ENCODE measurements at regions of chr17 and their contacts with region 1.

Region 1: DNA sequence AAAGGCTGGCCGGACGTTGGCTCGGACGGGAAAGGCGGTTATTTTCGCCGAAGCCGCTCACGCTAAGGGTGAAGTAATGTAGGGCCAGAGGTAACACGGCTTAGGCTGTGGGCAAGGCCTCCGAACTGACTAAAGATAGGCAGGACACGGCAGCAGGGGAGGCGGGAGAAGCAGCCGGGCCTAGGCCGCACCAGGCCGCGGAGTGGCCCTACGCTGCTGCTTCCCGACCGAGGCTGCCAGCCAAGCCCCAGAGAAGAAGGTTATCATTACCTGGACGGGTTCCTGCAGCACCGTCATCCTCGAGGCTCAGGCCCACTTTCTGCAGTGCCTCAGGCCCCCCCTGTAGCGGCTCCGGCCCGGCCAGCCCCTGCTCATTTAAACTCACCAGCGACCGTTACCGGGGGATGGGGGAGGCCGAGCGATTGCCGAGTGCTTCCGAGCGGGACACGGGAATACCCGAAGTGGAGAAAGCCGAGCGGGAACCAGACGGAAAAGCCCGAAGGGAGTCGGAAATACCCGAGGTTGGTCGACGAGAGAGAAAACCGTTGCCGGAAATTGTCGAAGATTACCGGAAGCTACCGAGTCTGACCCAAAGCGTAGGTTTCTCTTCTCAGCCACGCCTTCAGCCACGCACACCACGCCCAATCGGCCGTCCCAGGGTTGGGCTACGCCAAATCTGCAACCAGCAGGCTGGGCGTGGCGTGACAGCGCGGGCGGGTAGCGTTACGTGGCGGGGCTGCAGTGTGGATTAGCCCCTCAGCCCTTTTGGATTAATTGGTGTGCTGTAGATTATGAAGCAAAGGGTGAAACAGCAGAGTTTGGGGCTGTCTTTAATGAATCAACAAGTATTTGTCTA is at the start of gene CDC27:
- DNase-seq: peak; percentile 99 to 100 (median 99)
- H3K4me3 ChIP-seq: peak within 1 kb of the TSS; percentile 70 to 92
- H3K4me3 Mint-ChIP-seq: peak within 1 kb of the TSS; percentile 95 to 98 (median 96)
- H3K27ac ChIP-seq: peak within 1 kb of the TSS; percentile 95
- H3K27ac Mint-ChIP-seq: peak within 1 kb of the TSS; percentile 87 to 98 (median 96)
- H3K4me1 ChIP-seq: peaks cover 61% of the 10 kb centered on the region
- H3K4me1 Mint-ChIP-seq: peaks cover 35 to 79% (median 54%) of the 10 kb centered on the region in 4 donors
- H3K27me3 ChIP-seq: no peaks in the 10 kb centered on the region
- H3K27me3 Mint-ChIP-seq: no peaks in the 10 kb centered on the region
- total RNA-seq, gene CDC27: 60.2 to 73.4 TPM

Region 2: GRCh38 chr17:47205419-47205963 is 16.4 kb after region 1 on chr17:
- CTCF ChIA-PET with region 1: interaction called, 4 read pairs
- POLR2A ChIA-PET with region 1: interaction called, 98 read pairs
- intact Hi-C with region 1: loop called (anchors 1 kb)
- DNase-seq: peak; percentile 69 to 87 (median 80)
- H3K4me3 ChIP-seq: peak overlapping the region; percentile 24 to 54
- H3K4me3 Mint-ChIP-seq: peak overlapping the region; percentile 79 to 89 (median 86)
- H3K27ac ChIP-seq: peak overlapping the region; percentile 70
- H3K27ac Mint-ChIP-seq: peak overlapping the region; percentile 93 to 97 (median 95)
- H3K4me1 ChIP-seq: peaks cover 58% of the 10 kb centered on the region
- H3K4me1 Mint-ChIP-seq: peaks cover 42 to 67% (median 55%) of the 10 kb centered on the region in 4 donors
- H3K27me3 ChIP-seq: no peaks in the 10 kb centered on the region
- H3K27me3 Mint-ChIP-seq: no peaks in the 10 kb centered on the region

Region 3: GRCh38 chr17:47315451-47316266 is 126.6 kb after region 1 on chr17:
- CTCF ChIA-PET with region 1: interaction called, 3 read pairs
- POLR2A ChIA-PET with region 1: no interaction called
- intact Hi-C with region 1: loop called (anchors 1 kb)
- DNase-seq: peak in 4 of 5 donors; percentile 50 to 56 (median 52)
- H3K4me3 ChIP-seq: no peak overlapping the region
- H3K4me3 Mint-ChIP-seq: no peak overlapping the region
- H3K27ac ChIP-seq: no peak overlapping the region
- H3K27ac Mint-ChIP-seq: no peak overlapping the region
- H3K4me1 ChIP-seq: no peaks in the 10 kb centered on the region
- H3K4me1 Mint-ChIP-seq: no peaks in the 10 kb centered on the region
- H3K27me3 ChIP-seq: no peaks in the 10 kb centered on the region
- H3K27me3 Mint-ChIP-seq: peaks cover 0 to 1% of the 10 kb centered on the region in 2 donors

Region 4: GRCh38 chr17:47323382-47324222 is 134.5 kb after region 1 on chr17 and contains the start of gene EFCAB13:
- CTCF ChIA-PET with region 1: no interaction called
- POLR2A ChIA-PET with region 1: interaction called, 5 read pairs
- intact Hi-C with region 1: loop called (anchors 1 kb)
- DNase-seq: peak; percentile 60 to 75 (median 70)
- H3K4me3 ChIP-seq: peak within 1 kb of the TSS; percentile 70 to 85
- H3K4me3 Mint-ChIP-seq: peak within 1 kb of the TSS; percentile 95 to 100 (median 98)
- H3K27ac ChIP-seq: peak within 1 kb of the TSS; percentile 58
- H3K27ac Mint-ChIP-seq: peak within 1 kb of the TSS; percentile 88 to 98 (median 97)
- H3K4me1 ChIP-seq: peaks cover 4% of the 10 kb centered on the region
- H3K4me1 Mint-ChIP-seq: peaks cover 16 to 26% (median 19%) of the 10 kb centered on the region in 4 donors
- H3K27me3 ChIP-seq: no peaks in the 10 kb centered on the region
- H3K27me3 Mint-ChIP-seq: no peaks in the 10 kb centered on the region
- total RNA-seq, gene EFCAB13: 18.7 to 22.3 TPM

Region 5: DNA sequence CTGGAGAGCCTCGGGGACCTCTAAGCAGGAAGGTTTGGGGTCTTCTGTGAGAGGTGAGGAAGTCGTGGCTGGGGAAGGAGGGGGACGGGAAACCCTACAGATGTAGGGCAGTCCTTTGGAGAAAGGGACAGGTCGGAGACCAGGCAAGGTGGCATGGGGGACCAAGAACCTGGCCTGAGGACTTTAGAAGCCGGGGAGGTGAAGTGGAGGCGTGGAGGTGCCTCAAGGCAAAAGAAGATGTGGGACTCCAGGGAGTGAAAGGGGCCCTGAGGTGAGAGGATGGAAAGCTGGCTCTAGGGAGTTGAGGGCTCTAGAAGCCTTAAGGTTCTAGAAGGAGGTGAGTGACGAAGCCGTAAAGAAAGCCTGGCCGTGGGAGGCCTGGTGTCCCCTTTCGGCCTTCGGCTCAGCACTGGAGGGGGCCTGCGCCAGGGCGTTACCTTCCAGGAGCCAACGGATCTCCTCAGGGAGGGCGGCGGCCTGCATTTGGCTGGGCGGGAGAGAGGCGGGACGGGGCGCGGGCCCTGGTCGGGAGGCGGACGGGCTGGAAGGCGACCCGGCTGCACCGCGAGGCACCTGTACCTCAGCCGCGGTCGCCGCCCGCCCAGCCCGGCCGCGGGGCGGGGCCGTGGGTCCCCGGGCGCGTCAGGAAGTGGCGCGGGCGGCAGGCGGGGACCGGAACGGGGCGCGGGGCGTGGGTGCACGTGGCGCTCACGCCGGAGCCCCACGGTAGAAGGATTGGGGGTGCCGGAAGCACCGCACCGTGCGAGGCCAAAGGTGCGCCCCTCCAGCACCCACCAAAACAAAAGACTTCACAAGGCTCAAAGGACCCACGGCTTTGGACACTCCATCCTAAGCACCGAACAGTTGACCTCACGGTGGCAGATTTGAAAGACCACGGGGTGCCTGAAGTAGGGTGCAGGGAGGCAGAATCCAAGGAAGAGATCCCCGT is 1240.8 kb after region 1 on chr17 and contains the start of gene SKAP1:
- CTCF ChIA-PET with region 1: no interaction called
- POLR2A ChIA-PET with region 1: no interaction called
- intact Hi-C with region 1: loop called (anchors 10 kb)
- DNase-seq: peak; percentile 68 to 76 (median 71)
- H3K4me3 ChIP-seq: peak within 1 kb of the TSS; percentile 90 to 97
- H3K4me3 Mint-ChIP-seq: peak within 1 kb of the TSS; percentile 91 to 99 (median 97)
- H3K27ac ChIP-seq: peak within 1 kb of the TSS; percentile 89
- H3K27ac Mint-ChIP-seq: peak within 1 kb of the TSS; percentile 95 to 99 (median 97)
- H3K4me1 ChIP-seq: peaks cover 69% of the 10 kb centered on the region
- H3K4me1 Mint-ChIP-seq: peaks cover 62 to 97% (median 77%) of the 10 kb centered on the region in 4 donors
- H3K27me3 ChIP-seq: no peaks in the 10 kb centered on the region
- H3K27me3 Mint-ChIP-seq: no peaks in the 10 kb centered on the region
- total RNA-seq, gene SKAP1: 83.4 to 88.7 TPM

Measured in CD4-positive, alpha-beta memory T cell (primary cell).